GM12878 (cell line): ENCODE measurements at regions of chr20 and their contacts with region 1.

Region 1: GRCh38 chr20:25065625-25066338 is 7.8 kb upstream of the ACSS1 start:
- DNase-seq: peak; percentile 42
- ATAC-seq: peak; percentile 93
- H3K4me3 ChIP-seq: no peak overlapping the region
- H3K27ac ChIP-seq: no peak overlapping the region
- H3K4me1 ChIP-seq: no peaks in the 10 kb centered on the region
- H3K27me3 ChIP-seq: peaks cover 0 to under 1% of the 10 kb centered on the region in 2 experiments; a peak in 2 of 4 replicates
- CTCF ChIP-seq: peak; percentile 61 to 83 (median 74); a peak in 5 of 6 replicates
- EP300 ChIP-seq: no peak
- POLR2A ChIP-seq: no peak
- RAD21 ChIP-seq: peak; percentile 93

Region 2: DNA sequence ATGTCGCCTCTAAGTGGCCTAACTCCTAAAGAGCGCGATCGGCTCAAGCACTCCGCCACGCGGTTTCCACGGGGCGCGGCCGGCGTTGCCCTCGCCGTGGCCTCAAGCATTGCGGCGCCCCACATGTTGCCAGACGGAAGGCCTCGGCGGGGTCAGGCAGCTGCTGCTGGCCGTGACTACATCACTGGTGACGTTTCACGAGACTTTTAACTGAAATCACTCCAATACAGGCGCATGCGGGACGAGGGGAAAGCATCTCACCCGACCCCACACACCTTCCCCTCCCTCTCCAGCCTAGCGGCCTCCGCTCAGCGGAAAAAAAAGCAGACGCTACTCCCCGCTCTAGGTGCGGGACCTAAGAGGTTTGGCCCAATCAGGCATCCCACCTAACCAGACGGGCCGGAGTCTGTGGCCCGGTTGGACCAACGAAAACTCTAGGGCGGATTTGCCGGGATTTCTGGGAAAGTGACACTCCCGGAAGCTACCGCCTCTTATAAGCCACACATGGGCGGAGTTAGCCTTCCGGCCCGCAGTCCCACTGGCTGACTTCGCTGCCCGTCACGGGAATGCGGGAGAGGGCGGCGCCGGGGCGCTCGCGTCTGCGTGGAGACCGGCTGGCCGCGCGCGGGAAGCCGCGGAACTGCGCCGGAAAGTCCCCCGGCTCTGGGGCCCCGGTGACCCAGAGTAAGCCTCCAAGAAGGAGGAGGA is 1715.4 kb before region 1 on chr20 and contains the start of gene NXT1:
- CTCF ChIA-PET with region 1: no interaction called
- POLR2A ChIA-PET with region 1: no interaction called
- RAD21 ChIA-PET with region 1: no interaction called
- SMC1A ChIA-PET with region 1: no interaction called
- in situ Hi-C with region 1: loop called (anchors 25 kb)
- intact Hi-C with region 1: no loop called
- DNase-seq: peak; percentile 92
- ATAC-seq: peak; percentile 92
- H3K4me3 ChIP-seq: peak within 1 kb of the TSS; percentile 89
- H3K27ac ChIP-seq: peak within 1 kb of the TSS; percentile 95
- H3K4me1 ChIP-seq: peaks cover 4% of the 10 kb centered on the region
- H3K27me3 ChIP-seq: no peaks in the 10 kb centered on the region
- CTCF ChIP-seq: peak in 2 of 3 experiments; percentile 16 to 18; a peak in 1 of 6 replicates
- EP300 ChIP-seq: peak in 1 of 2 experiments; percentile 12; a peak in 2 of 4 replicates
- POLR2A ChIP-seq: peak; percentile 83
- RAD21 ChIP-seq: no peak
- polyA plus RNA-seq, gene NXT1: 10.2 to 24.2 TPM

Region 3: GRCh38 chr20:24610341-24611115 is 455.3 kb before region 1 on chr20:
- CTCF ChIA-PET with region 1: no interaction called
- POLR2A ChIA-PET with region 1: no interaction called
- RAD21 ChIA-PET with region 1: no interaction called
- SMC1A ChIA-PET with region 1: no interaction called
- in situ Hi-C with region 1: no loop called
- intact Hi-C with region 1: no loop called
- DNase-seq: no peak
- ATAC-seq: no peak
- H3K4me3 ChIP-seq: no peak overlapping the region
- H3K27ac ChIP-seq: no peak overlapping the region
- H3K4me1 ChIP-seq: peaks cover 16% of the 10 kb centered on the region
- H3K27me3 ChIP-seq: no peaks in the 10 kb centered on the region; a peak in 1 of 4 replicates
- CTCF ChIP-seq: no peak
- EP300 ChIP-seq: no peak
- POLR2A ChIP-seq: no peak
- RAD21 ChIP-seq: no peak

Region 4: DNA sequence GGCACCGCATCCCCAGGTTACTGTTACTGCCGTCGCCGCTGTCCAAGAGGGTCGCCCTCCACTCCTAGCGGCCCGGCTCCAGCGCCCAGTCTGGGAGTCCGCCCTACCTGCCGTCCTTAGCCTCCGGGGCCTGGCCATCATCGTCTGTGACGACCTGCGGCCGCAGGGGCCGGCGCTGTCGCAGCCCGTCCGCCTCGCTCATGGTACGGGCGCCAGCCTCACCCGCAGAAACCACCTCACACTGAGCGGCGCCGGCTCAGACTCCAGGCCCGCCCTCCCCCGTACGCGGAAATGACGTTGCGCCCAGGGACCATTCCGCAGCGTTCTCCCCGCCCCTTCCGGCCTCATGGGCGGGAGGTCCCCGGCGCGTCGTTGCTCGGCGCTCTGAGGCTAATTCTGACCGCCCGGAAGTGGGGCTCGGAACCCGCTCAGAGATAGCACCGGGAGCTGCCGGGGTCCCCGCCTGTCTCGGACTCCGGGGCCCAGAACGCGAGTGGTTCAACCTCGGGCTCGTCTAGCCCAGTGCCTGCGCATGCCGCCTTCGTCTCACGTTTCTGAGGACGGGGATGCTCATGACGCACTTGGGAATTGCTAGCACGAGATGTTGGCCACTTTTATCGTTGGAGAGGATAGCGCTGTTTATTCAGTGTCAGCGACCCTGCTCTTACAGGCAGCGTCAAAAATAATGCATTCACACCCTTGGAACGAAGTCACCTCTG is 73.1 kb before region 1 on chr20 and contains the start of gene APMAP:
- CTCF ChIA-PET with region 1: interaction called, 244 read pairs
- POLR2A ChIA-PET with region 1: interaction called, 3 read pairs
- RAD21 ChIA-PET with region 1: interaction called, 87 read pairs
- SMC1A ChIA-PET with region 1: interaction called, 116 read pairs
- in situ Hi-C with region 1: loop called (anchors 5 kb)
- intact Hi-C with region 1: loop called (anchors 1 kb)
- DNase-seq: peak; percentile 66
- ATAC-seq: peak; percentile 93
- H3K4me3 ChIP-seq: peak within 1 kb of the TSS; percentile 87
- H3K27ac ChIP-seq: peak within 1 kb of the TSS; percentile 77
- H3K4me1 ChIP-seq: peaks cover 7% of the 10 kb centered on the region; the same call in 1 of the 2 replicates
- H3K27me3 ChIP-seq: no peaks in the 10 kb centered on the region
- CTCF ChIP-seq: no peak
- EP300 ChIP-seq: 0 out of 4 replicates have a peak, but pooled peaks of 1 of the 2 experiments have one; percentile 39
- POLR2A ChIP-seq: peak; percentile 98
- RAD21 ChIP-seq: no peak
- polyA plus RNA-seq, gene APMAP: 12.1 to 22.3 TPM

Region 5: DNA sequence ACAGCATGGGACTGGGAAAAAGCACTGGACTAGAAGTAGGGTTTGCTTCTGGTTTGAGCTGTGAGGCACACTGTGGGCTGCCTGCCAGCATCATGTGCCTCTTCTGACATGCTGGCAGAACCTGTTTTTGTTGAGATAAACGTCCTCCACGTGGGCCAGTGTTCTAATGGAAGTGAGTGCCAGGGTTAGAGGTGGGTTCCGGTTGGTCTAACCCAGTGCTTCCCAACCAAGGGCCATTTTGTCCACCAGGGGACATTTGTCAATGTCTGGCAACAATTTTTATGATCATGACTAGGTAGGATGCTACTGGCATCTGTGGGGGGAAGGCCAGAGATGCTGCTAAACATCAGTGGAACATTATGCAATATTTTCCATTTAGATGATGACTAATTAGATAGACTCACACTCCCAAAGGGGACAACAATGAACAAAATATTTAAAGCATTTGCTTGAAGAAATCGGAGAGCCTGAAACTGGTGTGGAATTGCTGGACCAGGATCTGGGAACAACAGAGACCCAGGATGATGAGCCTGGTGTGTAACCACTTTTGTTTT is 65.4 kb before region 1 on chr20:
- CTCF ChIA-PET with region 1: interaction called, 244 read pairs
- POLR2A ChIA-PET with region 1: interaction called, 3 read pairs
- RAD21 ChIA-PET with region 1: interaction called, 87 read pairs
- SMC1A ChIA-PET with region 1: interaction called, 116 read pairs
- in situ Hi-C with region 1: no loop called
- intact Hi-C with region 1: loop called (anchors 1 kb)
- DNase-seq: no peak
- ATAC-seq: no peak
- H3K4me3 ChIP-seq: no peak overlapping the region
- H3K27ac ChIP-seq: no peak overlapping the region
- H3K4me1 ChIP-seq: no peaks in the 10 kb centered on the region
- H3K27me3 ChIP-seq: no peaks in the 10 kb centered on the region
- CTCF ChIP-seq: no peak
- EP300 ChIP-seq: no peak
- POLR2A ChIP-seq: no peak
- RAD21 ChIP-seq: no peak

Region 6: GRCh38 chr20:25178563-25179438 is 113.0 kb after region 1 on chr20:
- CTCF ChIA-PET with region 1: interaction called, 6 read pairs
- POLR2A ChIA-PET with region 1: no interaction called
- RAD21 ChIA-PET with region 1: interaction called, 5 read pairs
- SMC1A ChIA-PET with region 1: no interaction called
- in situ Hi-C with region 1: loop called (anchors 10 kb)
- intact Hi-C with region 1: loop called (anchors 1 kb)
- DNase-seq: no peak
- ATAC-seq: peak; percentile 79
- H3K4me3 ChIP-seq: no peak overlapping the region
- H3K27ac ChIP-seq: no peak overlapping the region
- H3K4me1 ChIP-seq: no peaks in the 10 kb centered on the region
- H3K27me3 ChIP-seq: no peaks in the 10 kb centered on the region
- CTCF ChIP-seq: peak; percentile 77 to 93 (median 84)
- EP300 ChIP-seq: no peak
- POLR2A ChIP-seq: no peak
- RAD21 ChIP-seq: peak; percentile 93

Region 7: GRCh38 chr20:25318471-25319240 is 252.9 kb after region 1 on chr20:
- CTCF ChIA-PET with region 1: no interaction called
- POLR2A ChIA-PET with region 1: no interaction called
- RAD21 ChIA-PET with region 1: no interaction called
- SMC1A ChIA-PET with region 1: no interaction called
- in situ Hi-C with region 1: no loop called
- intact Hi-C with region 1: no loop called
- DNase-seq: peak; percentile 88
- ATAC-seq: peak; percentile 94
- H3K4me3 ChIP-seq: no peak overlapping the region
- H3K27ac ChIP-seq: peak overlapping the region; percentile 93
- H3K4me1 ChIP-seq: peaks cover 40% of the 10 kb centered on the region
- H3K27me3 ChIP-seq: no peaks in the 10 kb centered on the region
- CTCF ChIP-seq: no peak
- EP300 ChIP-seq: peak; percentile 77 to 89; a peak in 3 of 4 replicates
- POLR2A ChIP-seq: peak; percentile 77
- RAD21 ChIP-seq: no peak